Naive thymus-derived CD4-positive, alpha-beta T cell (primary cell): ENCODE measurements at regions of chr13 and their contacts with region 1.

Region 1: GRCh38 chr13:111184458-111185401 is 69.6 kb downstream of the ARHGEF7 start:
- DNase-seq: peak in 7 of 9 donors; percentile 52 to 68 (median 55)
- ATAC-seq: peak; percentile 67
- H3K4me3 ChIP-seq: peak overlapping the region; percentile 22
- H3K4me3 Mint-ChIP-seq: peak overlapping the region; percentile 65 to 88 (median 82)
- H3K27ac ChIP-seq: peak overlapping the region; percentile 62
- H3K27ac Mint-ChIP-seq: peak overlapping the region; percentile 84 to 98 (median 93)
- H3K4me1 ChIP-seq: peaks cover 50 to 92% of the 10 kb centered on the region in 2 donors
- H3K4me1 Mint-ChIP-seq: peaks cover 84 to 100% (median 95%) of the 10 kb centered on the region in 7 donors
- H3K27me3 ChIP-seq: no peaks in the 10 kb centered on the region
- H3K27me3 Mint-ChIP-seq: no peaks in the 10 kb centered on the region

Region 2: DNA sequence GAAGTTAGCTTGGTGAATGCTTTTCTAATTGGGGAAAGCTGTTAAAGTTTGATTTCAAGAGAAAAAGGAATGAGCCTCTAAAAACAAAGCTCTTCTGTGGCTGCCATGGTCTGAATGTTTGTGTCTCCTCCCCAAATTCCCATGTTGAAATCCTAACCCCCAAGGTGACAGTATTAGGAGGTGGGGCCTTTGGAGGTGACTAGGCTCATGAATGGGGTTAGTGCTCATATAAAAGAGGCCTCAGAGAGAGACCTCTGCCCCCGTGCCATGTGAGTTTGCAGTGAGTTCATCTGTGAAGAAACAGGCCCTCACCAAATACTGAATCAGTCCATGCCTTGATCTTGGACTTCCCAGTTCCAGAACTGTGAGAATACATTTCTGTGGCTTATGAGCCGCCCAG is 13.1 kb before region 1 on chr13:
- CTCF ChIA-PET with region 1: interaction called, 3 read pairs
- POLR2A ChIA-PET with region 1: interaction called, 4 read pairs
- intact Hi-C with region 1: loop called in 1 of 2 experiments (anchors 2 kb)
- DNase-seq: no peak
- ATAC-seq: no peak
- H3K4me3 ChIP-seq: no peak overlapping the region
- H3K4me3 Mint-ChIP-seq: no peak overlapping the region
- H3K27ac ChIP-seq: no peak overlapping the region
- H3K27ac Mint-ChIP-seq: peak overlapping the region in 5 of 9 donors; percentile 38 to 70 (median 64)
- H3K4me1 ChIP-seq: peaks cover 0 to 45% of the 10 kb centered on the region in 2 donors
- H3K4me1 Mint-ChIP-seq: peaks cover 40 to 97% (median 92%) of the 10 kb centered on the region in 7 donors
- H3K27me3 ChIP-seq: no peaks in the 10 kb centered on the region
- H3K27me3 Mint-ChIP-seq: no peaks in the 10 kb centered on the region

Region 3: GRCh38 chr13:111202745-111203144 is 18.0 kb after region 1 on chr13:
- CTCF ChIA-PET with region 1: interaction called, 5 read pairs
- POLR2A ChIA-PET with region 1: interaction called, 11 read pairs
- intact Hi-C with region 1: loop called (anchors 1 to 2 kb)
- DNase-seq: peak in 7 of 9 donors; percentile 51 to 72 (median 65)
- ATAC-seq: peak; percentile 85
- H3K4me3 ChIP-seq: no peak overlapping the region
- H3K4me3 Mint-ChIP-seq: peak overlapping the region in 9 of 10 donors; percentile 15 to 68 (median 48)
- H3K27ac ChIP-seq: peak overlapping the region; percentile 32
- H3K27ac Mint-ChIP-seq: peak overlapping the region; percentile 52 to 91 (median 85)
- H3K4me1 ChIP-seq: peaks cover 4 to 38% of the 10 kb centered on the region in 2 donors
- H3K4me1 Mint-ChIP-seq: peaks cover 56 to 89% (median 81%) of the 10 kb centered on the region in 7 donors
- H3K27me3 ChIP-seq: no peaks in the 10 kb centered on the region
- H3K27me3 Mint-ChIP-seq: no peaks in the 10 kb centered on the region